ENCODE measurements at regions of chr13 and their contacts with region 1.

Region 1: DNA sequence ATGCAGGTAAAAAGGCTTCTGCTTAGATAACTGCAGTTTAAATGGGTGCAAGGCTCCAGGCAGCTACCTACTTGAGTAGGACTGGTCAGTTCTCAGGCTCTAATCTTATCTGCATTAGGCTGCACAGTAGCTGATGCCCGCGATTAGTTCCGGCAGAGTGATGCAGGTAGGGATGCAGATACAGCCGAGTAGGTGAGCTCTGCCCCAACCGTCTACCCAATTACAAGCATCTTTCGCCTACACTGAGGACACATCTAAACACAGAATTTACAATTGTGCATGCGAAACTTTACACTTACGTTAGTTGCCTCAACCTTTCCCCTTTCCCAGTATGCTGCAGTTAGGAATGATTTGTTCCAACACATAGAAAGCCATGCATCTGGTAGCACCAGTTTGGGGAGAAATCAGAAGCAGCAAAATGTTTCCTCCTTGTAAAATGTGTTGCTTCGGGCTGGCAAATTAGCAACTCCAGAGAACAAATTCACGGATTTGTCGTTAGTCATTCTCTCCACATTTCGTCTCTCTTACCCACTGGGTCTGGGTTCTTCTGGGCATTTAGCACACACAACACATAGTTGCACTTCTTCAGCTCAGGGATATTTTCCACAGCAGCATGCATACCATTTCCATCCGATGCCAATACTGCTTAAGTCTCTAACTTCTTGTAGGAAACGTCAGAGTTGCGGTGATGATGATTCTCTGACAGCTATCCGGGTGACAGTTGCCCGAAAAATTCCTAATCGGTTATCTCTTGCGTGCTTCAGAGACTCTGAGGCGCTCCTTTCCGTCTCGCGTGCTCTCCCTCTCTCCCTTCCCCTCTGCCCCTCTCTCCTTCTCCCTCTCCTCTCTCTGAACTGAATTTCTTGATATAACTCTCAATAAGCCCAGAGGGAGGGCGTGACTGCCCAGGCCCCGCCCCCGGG is at the start of gene PCDH9:
- DNase-seq: no peak
- ATAC-seq: peak; percentile 6
- total RNA-seq, gene PCDH9: 10.0 TPM

Region 2: GRCh38 chr13:67075239-67075638 is 154.5 kb before region 1 on chr13:
- intact Hi-C with region 1: loop called (anchors 5 kb)
- DNase-seq: no peak
- ATAC-seq: peak; percentile 87